Activated B cell treated with CpG ODN at 0.5 μM for 24 hours (primary cell): ENCODE measurements at regions of chr15 and their contacts with region 1.

Region 1: DNA sequence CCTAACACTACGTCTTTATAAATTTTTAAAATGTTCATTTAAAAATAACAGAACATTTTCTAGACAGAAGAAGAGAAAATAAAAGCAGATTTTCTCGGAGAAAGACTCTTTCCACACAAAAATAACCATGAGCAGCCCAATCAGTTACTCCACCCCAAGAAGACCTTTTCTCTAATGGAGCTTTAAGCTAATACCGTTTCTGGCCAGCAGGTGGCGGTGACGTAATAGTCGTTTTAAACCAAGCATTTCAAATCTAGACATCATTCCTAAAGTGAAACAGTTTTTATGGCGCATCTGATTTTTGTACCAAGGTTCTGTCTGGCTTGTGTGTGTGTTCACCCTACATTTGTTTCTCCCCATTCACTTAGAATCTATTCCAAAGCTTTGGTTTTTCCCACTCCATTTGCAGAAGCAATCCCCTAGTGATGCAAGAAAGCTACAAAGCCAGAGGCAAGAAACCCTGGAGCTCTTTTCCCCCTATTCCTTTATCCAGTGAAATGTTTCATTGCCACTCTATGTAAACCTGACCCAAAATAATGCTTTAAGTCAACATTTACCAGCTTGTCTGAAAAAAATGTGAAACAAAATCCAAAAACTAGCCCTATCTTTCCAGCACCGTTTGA is 336.7 kb upstream of the IGF1R start:
- DNase-seq: peak; percentile 18
- ATAC-seq: no peak
- H3K4me3 Mint-ChIP-seq: no peak overlapping the region
- H3K27ac Mint-ChIP-seq: no peak overlapping the region
- H3K4me1 Mint-ChIP-seq: no peaks in the 10 kb centered on the region
- H3K27me3 Mint-ChIP-seq: no peaks in the 10 kb centered on the region
- CTCF ChIP-seq: no peak

Region 2: DNA sequence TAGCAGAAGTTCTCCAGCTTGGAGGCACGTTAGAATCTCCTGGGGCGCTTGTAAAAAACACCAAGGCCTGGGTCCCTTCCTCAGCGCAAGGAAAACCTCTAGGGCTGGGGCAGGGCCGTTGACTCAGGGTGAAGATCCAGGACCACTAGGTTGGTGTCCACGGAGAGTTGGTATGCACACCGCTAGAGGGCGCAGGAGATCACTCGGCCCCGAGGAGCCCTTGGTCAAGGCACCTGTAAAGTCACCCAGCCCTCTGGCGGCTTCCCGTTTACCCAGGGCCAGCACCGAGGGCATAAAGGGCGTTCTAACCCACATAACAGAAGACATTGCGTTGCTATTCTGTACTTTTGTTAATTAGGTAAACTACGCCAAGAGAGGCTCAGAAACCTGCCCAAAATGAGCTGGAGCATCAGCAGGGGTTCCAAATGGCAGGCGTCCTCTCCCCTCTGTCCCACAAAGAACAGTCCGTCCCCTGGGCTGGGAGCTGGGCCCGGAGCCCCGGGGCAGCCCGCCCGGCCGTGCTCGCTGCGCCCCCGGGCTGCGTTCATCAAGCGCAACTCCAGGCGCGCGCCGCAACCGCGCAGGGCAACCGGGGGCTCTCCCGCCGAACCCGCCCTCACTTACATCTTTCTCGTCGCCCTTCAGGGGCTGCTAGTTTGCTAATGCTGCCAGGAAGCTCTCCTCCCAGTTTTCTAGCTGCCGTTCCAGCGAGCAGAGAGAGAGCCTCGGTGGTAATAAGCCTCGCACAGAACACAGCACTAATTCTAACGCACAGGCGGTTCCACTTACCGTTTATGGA is 19.0 kb before region 1 on chr15:
- CTCF ChIA-PET with region 1: no interaction called
- POLR2A ChIA-PET with region 1: no interaction called
- intact Hi-C with region 1: no loop called
- DNase-seq: no peak
- ATAC-seq: no peak
- H3K4me3 Mint-ChIP-seq: no peak overlapping the region
- H3K27ac Mint-ChIP-seq: no peak overlapping the region
- H3K4me1 Mint-ChIP-seq: no peaks in the 10 kb centered on the region
- H3K27me3 Mint-ChIP-seq: peaks cover 25% of the 10 kb centered on the region
- CTCF ChIP-seq: no peak

Region 3: DNA sequence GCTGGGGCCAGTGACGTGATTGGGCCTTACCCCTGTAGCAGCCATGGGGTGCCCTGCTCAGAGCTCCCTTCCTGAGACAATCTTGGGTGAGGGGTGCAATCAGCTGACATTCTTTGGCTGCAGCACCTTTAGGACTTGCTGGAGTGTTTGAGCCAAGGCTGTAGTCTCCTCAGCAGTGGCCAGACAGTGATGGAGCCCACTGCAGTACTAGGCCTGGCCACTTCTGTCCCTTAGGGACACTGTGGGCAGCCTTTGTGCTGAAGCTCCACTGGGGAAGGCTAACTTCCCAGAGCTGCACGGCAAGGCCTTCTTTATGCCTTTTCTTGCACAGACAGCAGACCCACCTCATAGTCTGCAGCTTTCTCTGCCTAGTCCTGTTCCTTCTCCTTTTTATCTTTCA is 51.7 kb after region 1 on chr15:
- CTCF ChIA-PET with region 1: no interaction called
- POLR2A ChIA-PET with region 1: no interaction called
- intact Hi-C with region 1: no loop called
- DNase-seq: no peak
- ATAC-seq: no peak
- H3K4me3 Mint-ChIP-seq: no peak overlapping the region
- H3K27ac Mint-ChIP-seq: no peak overlapping the region
- H3K4me1 Mint-ChIP-seq: no peaks in the 10 kb centered on the region
- H3K27me3 Mint-ChIP-seq: no peaks in the 10 kb centered on the region
- CTCF ChIP-seq: no peak

Region 4: DNA sequence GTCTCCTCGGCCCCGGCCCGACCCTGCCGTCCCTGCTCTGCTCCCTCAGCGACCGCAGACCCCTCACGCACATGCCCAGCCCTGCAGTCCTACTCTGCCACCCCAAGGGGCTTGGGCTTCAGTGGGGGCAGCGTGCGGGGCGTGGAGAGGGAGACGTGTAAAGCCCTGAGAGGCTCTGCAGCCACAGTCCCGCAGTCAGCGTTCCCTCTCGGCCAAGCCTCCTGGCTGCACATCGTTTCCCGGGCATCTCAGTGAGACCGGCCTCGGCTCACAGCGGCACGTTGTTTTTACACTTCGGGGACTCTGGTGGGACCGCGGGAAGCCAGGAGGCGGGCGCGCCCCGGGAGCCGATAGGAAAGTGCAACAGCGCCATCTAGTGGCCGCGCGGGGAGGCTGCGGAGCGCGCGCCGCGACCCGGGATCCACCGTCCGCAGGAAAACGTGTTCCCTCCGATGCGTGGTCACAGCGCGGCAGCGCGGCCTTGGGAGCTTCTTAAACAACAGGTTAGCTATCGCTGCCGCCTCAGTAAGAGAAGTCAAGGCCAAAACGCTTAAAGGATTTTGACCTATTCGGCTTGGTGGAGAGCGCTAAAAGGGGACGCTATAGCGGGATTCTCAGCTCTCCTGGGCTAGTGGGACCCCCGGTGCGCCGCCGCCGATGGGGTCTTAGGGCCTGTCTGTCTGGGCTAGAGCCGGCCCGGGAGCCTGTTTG is 109.9 kb after region 1 on chr15:
- CTCF ChIA-PET with region 1: interaction called, 15 read pairs
- POLR2A ChIA-PET with region 1: no interaction called
- intact Hi-C with region 1: loop called (anchors 1 kb)
- DNase-seq: peak; percentile 47
- ATAC-seq: no peak
- H3K4me3 Mint-ChIP-seq: peak overlapping the region; percentile 37
- H3K27ac Mint-ChIP-seq: no peak overlapping the region
- H3K4me1 Mint-ChIP-seq: no peaks in the 10 kb centered on the region
- H3K27me3 Mint-ChIP-seq: peaks cover 24% of the 10 kb centered on the region
- CTCF ChIP-seq: peak; percentile 80

Region 5: GRCh38 chr15:98428253-98428989 is 116.7 kb after region 1 on chr15:
- CTCF ChIA-PET with region 1: interaction called, 15 read pairs
- POLR2A ChIA-PET with region 1: no interaction called
- intact Hi-C with region 1: loop called (anchors 2 kb)
- DNase-seq: peak; percentile 60
- ATAC-seq: peak; percentile 66
- H3K4me3 Mint-ChIP-seq: peak overlapping the region; percentile 50
- H3K27ac Mint-ChIP-seq: no peak overlapping the region
- H3K4me1 Mint-ChIP-seq: peaks cover 3% of the 10 kb centered on the region
- H3K27me3 Mint-ChIP-seq: peaks cover 37% of the 10 kb centered on the region
- CTCF ChIP-seq: peak; percentile 42